IMR-90 (cell line): ENCODE measurements at regions of chr11 and their contacts with region 1.

Region 1: DNA sequence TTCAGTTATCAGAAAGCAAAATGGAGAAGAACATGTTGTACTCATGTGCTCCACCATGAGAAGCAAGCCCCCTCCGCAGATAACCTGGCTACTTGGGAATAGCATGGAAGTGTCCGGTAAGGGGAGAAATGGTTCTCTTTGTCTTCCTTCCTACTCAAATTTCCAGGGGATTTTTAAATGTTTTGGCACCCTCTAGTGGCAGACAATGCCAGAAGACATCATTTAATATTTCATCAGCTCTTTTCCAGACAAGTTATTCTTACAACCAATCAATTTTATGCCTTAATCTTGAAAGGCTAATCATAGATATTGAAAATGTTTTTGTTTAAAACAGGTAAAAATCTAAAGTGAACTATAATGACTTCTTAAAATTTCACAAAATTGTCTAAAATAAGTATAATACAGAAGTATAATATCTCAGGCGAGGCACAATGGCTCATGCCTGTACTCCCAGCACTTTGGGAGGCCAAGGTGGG is 15.7 kb downstream of the CRTAM start:
- DNase-seq: peak; percentile 84
- ATAC-seq: peak; percentile 52
- H3K4me3 ChIP-seq: no peak overlapping the region
- H3K27ac ChIP-seq: no peak overlapping the region
- H3K4me1 ChIP-seq: peaks cover 4% of the 10 kb centered on the region
- H3K27me3 ChIP-seq: no peaks in the 10 kb centered on the region
- CTCF ChIP-seq: peak; percentile 85
- POLR2A ChIP-seq: no peak
- RAD21 ChIP-seq: peak; percentile 82

Region 2: DNA sequence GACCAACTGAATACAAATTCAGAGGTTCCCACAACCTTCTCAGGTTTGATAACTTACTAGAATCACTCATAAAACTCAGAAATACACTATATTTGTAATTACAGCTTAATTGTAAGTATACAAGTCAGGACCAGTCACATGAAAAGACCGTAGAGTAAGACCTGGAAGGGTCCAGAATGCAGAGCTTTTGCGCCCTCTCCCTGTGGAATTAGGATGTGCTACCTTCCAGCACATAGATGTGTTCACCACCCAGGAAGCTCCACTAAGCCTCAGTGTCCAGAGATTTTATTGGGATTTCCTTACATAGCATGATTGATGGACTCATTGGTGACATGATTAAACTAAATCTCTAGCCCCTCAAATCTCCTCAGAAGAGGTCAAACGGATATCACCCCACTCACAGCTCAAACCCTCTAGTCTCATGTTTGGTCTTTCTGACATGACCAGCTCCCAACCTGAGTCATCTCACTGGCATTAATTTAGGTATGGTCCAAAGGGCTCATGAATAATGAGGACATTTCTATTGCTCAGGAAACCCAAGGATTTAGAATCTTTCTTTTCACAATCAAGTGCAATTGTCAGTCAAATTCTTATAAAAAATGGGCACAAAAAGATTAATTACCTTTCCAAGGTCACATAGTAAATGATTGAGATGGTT is 275.7 kb before region 1 on chr11:
- CTCF ChIA-PET with region 1: interaction called, 4 read pairs
- POLR2A ChIA-PET with region 1: no interaction called
- dilution Hi-C with region 1: no loop called
- in situ Hi-C with region 1: no loop called
- intact Hi-C with region 1: loop called (anchors 1 kb)
- DNase-seq: no peak
- ATAC-seq: no peak
- H3K4me3 ChIP-seq: no peak overlapping the region
- H3K27ac ChIP-seq: no peak overlapping the region
- H3K4me1 ChIP-seq: peaks cover 2% of the 10 kb centered on the region; the same call in 1 of the 2 replicates
- H3K27me3 ChIP-seq: no peaks in the 10 kb centered on the region; the same call in 1 of the 2 replicates
- CTCF ChIP-seq: peak; percentile 5; the same call in 1 of the 2 replicates
- POLR2A ChIP-seq: no peak
- RAD21 ChIP-seq: no peak

Region 3: DNA sequence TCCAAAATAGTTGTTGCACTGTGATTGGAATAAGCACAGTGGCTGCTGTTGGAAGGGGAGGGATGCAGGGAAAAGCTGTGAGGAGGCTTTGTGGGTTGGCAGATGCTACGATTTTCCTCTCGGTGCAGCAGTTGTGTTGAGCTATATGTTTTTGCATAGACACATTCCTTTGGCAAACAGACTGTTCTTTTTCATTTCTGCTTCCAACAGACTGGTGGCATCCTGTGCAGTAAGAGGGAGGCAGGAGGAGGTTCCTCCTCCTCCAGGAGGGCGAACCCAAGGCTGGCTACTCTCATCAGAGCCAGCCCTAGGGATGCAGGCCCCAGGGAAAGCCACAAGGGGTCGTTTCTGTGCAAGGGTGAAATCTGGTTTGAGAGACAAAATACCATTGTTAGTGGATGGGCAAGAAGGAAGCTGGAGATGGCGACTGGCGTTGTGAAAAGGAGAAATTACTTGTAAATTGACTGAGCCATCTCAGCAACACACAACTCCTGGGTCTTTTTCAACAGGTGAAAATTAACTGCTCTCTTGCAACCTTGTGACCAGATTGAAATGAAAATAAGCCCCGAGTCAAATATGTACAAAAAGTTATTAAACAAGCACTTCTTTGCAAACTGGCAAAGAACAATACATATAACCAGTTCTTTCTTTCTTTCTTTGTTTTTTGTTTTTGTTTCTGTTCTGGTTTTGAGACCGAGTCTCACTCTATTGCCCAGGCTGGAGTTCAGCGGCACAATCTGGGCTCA is 225.0 kb before region 1 on chr11:
- CTCF ChIA-PET with region 1: interaction called, 39 read pairs
- POLR2A ChIA-PET with region 1: no interaction called
- dilution Hi-C with region 1: no loop called
- in situ Hi-C with region 1: loop called (anchors 5 kb)
- intact Hi-C with region 1: loop called (anchors 1 kb)
- DNase-seq: peak; percentile 77
- ATAC-seq: peak; percentile 95
- H3K4me3 ChIP-seq: no peak overlapping the region
- H3K27ac ChIP-seq: no peak overlapping the region
- H3K4me1 ChIP-seq: peaks cover 6% of the 10 kb centered on the region
- H3K27me3 ChIP-seq: peaks cover 9% of the 10 kb centered on the region
- CTCF ChIP-seq: peak; percentile 93
- POLR2A ChIP-seq: no peak
- RAD21 ChIP-seq: peak; percentile 88

Region 4: DNA sequence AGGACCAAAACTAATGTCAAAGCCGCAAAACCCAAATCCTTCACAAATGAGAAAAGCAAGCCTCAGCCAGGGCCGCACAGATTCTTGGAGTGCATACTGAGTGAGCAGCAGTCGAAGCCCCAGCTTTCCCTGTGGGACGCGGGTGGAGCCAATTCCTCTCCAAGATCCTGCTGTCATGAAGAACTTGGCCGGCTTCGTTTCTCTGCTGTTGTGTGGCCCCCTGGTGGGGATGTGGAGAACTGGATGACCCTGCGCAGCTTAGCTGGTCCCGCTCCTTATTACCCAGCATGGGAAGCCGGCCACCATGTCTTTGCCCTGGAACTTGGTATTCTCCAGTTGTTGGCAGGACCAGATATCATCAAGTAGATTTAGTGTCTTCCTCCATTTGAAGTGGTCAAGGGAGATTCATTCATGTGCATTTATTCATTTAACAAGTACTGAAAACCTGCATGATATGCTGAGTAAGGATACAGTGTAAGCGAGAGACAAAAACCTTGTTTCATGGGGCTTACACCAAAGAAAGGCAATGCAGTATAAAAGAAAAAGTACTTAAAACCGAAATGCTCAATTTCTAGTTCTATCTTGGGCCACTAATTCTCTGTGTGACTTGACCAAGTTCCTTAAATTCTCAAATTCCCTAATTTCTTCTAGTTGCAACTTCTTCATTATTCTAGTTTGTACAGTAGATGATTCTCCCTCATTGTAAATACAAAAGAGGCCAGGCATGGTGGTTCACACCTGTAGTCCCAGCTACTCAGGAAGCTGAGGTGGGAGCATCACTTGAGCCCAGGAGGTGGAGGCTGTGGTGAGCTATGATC is 72.4 kb before region 1 on chr11:
- CTCF ChIA-PET with region 1: interaction called, 4 read pairs
- POLR2A ChIA-PET with region 1: no interaction called
- dilution Hi-C with region 1: no loop called
- in situ Hi-C with region 1: no loop called
- intact Hi-C with region 1: loop called (anchors 5 kb)
- DNase-seq: peak; percentile 90
- ATAC-seq: peak; percentile 87
- H3K4me3 ChIP-seq: no peak overlapping the region
- H3K27ac ChIP-seq: no peak overlapping the region
- H3K4me1 ChIP-seq: peaks cover 10% of the 10 kb centered on the region
- H3K27me3 ChIP-seq: no peaks in the 10 kb centered on the region
- CTCF ChIP-seq: peak; percentile 94
- POLR2A ChIP-seq: no peak
- RAD21 ChIP-seq: peak; percentile 95

Region 5: DNA sequence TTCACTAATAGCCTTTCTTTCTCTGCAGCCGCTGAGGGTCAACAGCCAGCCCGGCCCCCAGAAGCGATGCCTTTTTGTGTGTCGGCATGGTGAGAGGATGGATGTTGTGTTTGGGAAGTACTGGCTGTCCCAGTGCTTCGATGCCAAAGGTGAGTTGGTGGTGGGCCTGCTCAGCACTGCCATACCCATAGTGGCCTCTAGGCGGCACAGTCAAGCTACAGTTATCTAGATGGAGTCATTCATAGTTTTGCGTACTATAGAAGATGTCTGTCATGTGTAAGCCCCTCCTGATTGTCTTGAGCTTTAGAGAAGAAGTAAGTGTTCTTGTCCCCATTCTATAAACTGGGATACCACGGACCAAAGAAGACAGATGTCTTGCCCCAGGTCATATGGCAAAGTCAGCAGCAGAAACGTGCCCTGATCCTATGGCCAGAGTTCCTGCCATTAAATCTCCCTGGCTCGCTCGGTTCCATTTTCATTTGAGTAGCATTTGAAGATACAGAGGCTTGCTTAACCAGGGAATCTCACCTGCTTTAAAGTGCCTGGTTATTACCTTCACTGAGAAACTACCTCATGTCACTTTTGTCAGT is 57.8 kb before region 1 on chr11:
- CTCF ChIA-PET with region 1: interaction called, 5 read pairs
- POLR2A ChIA-PET with region 1: no interaction called
- dilution Hi-C with region 1: no loop called
- in situ Hi-C with region 1: loop called (anchors 5 kb)
- intact Hi-C with region 1: loop called (anchors 1 kb)
- DNase-seq: peak; percentile 36
- ATAC-seq: no peak
- H3K4me3 ChIP-seq: no peak overlapping the region
- H3K27ac ChIP-seq: no peak overlapping the region
- H3K4me1 ChIP-seq: peaks cover 7% of the 10 kb centered on the region
- H3K27me3 ChIP-seq: no peaks in the 10 kb centered on the region
- CTCF ChIP-seq: peak; percentile 60
- POLR2A ChIP-seq: no peak
- RAD21 ChIP-seq: peak; percentile 52

Region 6: DNA sequence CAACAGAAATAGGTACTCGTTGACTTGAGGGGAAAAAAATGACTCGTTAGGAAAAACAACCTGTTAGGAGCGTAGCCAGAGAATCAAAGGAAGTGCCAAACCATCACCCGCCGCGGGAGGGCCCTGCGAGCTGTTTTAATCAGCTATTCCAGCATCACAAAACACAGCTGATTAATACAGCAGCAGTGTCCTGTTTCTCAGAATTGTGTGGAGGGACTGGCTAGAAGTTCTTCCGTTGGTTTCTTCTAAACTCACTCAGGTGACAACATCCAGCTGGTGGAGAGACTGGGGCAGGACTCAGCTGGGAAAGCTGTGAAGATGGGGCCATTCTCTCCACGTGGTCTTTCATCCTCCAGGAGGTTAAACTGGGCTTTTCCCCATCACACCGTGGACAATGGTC is 179.9 kb after region 1 on chr11:
- CTCF ChIA-PET with region 1: no interaction called
- POLR2A ChIA-PET with region 1: no interaction called
- dilution Hi-C with region 1: loop called (anchors 25 kb)
- in situ Hi-C with region 1: no loop called
- intact Hi-C with region 1: no loop called
- DNase-seq: no peak
- ATAC-seq: peak; percentile 42
- H3K4me3 ChIP-seq: no peak overlapping the region
- H3K27ac ChIP-seq: no peak overlapping the region
- H3K4me1 ChIP-seq: no peaks in the 10 kb centered on the region
- H3K27me3 ChIP-seq: peaks cover 8% of the 10 kb centered on the region
- CTCF ChIP-seq: peak; percentile 33; the same call in 1 of the 2 replicates
- POLR2A ChIP-seq: no peak
- RAD21 ChIP-seq: peak; percentile 21; the same call in 1 of the 2 replicates

Region 7: DNA sequence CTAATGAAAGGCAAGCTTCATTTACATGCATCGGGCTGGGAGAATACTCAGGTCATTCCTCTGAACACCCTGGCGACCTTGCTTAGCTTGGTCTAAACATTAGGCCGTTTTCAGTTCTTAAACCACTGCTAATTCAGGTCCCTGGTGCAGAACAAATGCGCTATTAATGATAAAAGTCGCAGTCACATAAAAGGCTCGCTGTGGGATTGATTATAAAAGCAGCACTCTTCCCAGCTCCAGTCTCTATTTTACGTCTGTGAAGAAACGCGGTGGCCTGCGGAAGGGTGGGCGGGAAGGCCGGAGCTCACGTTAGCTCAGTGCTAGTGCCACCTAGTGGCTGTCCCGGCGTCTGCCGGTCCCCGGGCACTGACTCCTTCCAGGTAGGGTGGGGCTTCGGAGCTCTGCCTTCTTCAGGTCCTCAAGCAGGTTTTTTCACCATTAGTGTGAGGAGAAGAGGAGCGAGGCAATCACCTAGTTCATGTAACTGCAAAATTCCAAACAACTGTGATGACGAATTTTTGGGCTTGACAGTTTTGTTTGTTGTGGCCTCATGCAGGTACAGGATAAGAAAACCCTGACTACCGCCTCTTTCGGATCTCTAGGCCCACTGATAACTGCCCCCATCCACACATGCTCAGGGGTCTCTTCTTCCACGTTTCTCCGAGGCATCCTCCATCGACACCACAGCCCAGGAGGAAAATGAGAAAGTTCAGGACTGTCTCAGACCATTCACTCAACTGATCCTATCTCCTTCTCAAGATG is 407.5 kb after region 1 on chr11:
- CTCF ChIA-PET with region 1: no interaction called
- POLR2A ChIA-PET with region 1: no interaction called
- dilution Hi-C with region 1: no loop called
- in situ Hi-C with region 1: loop called (anchors 25 kb)
- intact Hi-C with region 1: no loop called
- DNase-seq: peak; percentile 67
- ATAC-seq: peak; percentile 98
- H3K4me3 ChIP-seq: peak overlapping the region; percentile 31; the same call in 1 of the 2 replicates
- H3K27ac ChIP-seq: no peak overlapping the region
- H3K4me1 ChIP-seq: peaks cover 3% of the 10 kb centered on the region; the same call in 1 of the 2 replicates
- H3K27me3 ChIP-seq: peaks cover 7% of the 10 kb centered on the region; the same call in 1 of the 2 replicates
- CTCF ChIP-seq: peak; percentile 89
- POLR2A ChIP-seq: no peak
- RAD21 ChIP-seq: peak; percentile 86